Activated T-helper 1 cell treated with anti-CD3 and anti-CD28 coated beads, Interleukin-12 subunit alpha, Interleukin-12 subunit beta, Interleukin-2, Interleukin-4 antibody, amounts not matched to agents 30 ng/mL and 10 ng/mL and 1 ng/mL, durations not matched to agents 14 hours and 24 hours and 36 hours (primary cell): ENCODE measurements at regions of chr5 and their contacts with region 1.

Region 1: GRCh38 chr5:61331407-61332357 is at the start of gene ZSWIM6:
- DNase-seq: peak; percentile 96
- H3K4me3 Mint-ChIP-seq: peak within 1 kb of the TSS; percentile 96
- H3K27ac Mint-ChIP-seq: peak within 1 kb of the TSS; percentile 99
- H3K4me1 Mint-ChIP-seq: peaks cover 52% of the 10 kb centered on the region
- H3K27me3 Mint-ChIP-seq: peaks cover 45% of the 10 kb centered on the region
- total RNA-seq, gene ZSWIM6: 9.6 TPM in 2 replicates

Region 2: DNA sequence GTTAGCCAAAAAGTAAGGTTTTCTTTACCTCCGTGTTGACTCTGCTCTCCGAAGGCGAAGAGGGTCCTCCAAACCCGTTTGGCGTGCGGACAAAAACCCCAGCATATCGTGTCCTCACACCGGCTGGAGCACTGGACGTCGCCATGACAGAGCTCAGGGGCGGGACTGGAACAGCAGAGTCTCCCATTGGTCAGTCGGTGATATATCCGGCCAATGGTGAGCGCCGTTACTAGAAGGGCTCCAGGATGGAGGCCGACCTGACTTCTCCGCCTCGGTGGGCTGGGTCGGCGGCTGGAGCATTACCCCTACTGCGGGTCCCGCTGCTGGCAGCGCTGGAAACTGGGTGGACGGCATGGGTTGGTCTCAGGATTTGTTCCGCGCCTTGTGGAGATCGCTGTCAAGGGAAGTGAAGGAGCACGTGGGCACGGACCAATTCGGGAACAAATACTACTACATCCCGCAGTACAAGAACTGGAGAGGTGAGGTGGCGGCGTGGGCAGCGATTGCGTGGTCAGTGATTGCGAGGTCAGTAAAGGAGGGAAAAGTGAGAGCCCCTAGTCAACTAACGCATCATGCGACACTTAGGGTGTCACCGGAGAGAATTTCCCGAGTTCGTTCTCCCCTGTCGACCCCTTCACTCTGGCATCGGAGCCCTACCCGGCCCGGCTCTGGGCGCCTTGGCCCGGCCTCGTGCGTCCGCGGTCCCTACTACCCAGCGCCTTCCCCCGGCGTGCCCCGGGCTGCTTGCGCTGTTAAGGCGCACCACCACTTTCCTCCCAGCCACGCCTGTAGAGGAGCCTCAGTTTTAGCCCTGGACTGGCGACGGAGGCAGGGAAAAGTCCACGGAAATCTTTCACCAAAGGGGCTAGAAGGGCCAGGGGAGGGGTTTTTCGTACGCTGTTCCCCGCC is 386.5 kb before region 1 on chr5 and contains the starts of genes ERCC8 and NDUFAF2:
- intact Hi-C with region 1: loop called (anchors 1 kb)
- DNase-seq: peak; percentile 85
- H3K4me3 Mint-ChIP-seq: no peak within 1 kb of the TSS
- H3K27ac Mint-ChIP-seq: no peak within 1 kb of the TSS
- H3K4me1 Mint-ChIP-seq: peaks cover 22% of the 10 kb centered on the region
- H3K27me3 Mint-ChIP-seq: no peaks in the 10 kb centered on the region
- total RNA-seq, gene ERCC8: 9.8 and 10.7 TPM in 2 replicates
- total RNA-seq, gene NDUFAF2: 32.9 and 33.8 TPM in 2 replicates

Region 3: GRCh38 chr5:61162010-61162831 is 169.5 kb before region 1 on chr5 and contains the start of gene SMIM15:
- intact Hi-C with region 1: loop called (anchors 1 kb)
- DNase-seq: peak; percentile 81
- H3K4me3 Mint-ChIP-seq: peak within 1 kb of the TSS; percentile 95
- H3K27ac Mint-ChIP-seq: peak within 1 kb of the TSS; percentile 92
- H3K4me1 Mint-ChIP-seq: peaks cover 40% of the 10 kb centered on the region
- H3K27me3 Mint-ChIP-seq: no peaks in the 10 kb centered on the region
- total RNA-seq, gene SMIM15: 84.0 and 86.7 TPM in 2 replicates

Region 4: DNA sequence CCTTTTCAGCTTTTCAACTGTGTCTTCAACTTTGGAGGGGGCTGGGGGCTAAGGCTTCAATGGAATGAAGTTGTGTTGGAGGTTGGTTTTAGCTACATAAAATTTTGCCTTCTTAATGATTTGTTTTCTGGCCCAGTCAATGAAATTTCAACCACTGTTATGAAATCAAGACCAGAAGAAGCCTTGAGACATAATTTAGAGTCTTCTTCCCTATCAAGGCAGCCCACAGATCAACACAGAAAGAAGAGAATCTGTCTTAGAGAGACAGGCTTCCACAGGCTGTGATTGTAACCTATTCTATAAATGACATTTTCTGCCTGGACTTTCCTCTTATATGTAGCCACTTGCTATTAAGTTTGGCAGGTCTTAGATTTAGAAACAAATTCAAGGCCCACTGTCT is 46.2 kb before region 1 on chr5:
- intact Hi-C with region 1: loop called (anchors 2 kb)
- DNase-seq: no peak
- H3K4me3 Mint-ChIP-seq: no peak overlapping the region
- H3K27ac Mint-ChIP-seq: no peak overlapping the region
- H3K4me1 Mint-ChIP-seq: no peaks in the 10 kb centered on the region
- H3K27me3 Mint-ChIP-seq: no peaks in the 10 kb centered on the region

Region 5: DNA sequence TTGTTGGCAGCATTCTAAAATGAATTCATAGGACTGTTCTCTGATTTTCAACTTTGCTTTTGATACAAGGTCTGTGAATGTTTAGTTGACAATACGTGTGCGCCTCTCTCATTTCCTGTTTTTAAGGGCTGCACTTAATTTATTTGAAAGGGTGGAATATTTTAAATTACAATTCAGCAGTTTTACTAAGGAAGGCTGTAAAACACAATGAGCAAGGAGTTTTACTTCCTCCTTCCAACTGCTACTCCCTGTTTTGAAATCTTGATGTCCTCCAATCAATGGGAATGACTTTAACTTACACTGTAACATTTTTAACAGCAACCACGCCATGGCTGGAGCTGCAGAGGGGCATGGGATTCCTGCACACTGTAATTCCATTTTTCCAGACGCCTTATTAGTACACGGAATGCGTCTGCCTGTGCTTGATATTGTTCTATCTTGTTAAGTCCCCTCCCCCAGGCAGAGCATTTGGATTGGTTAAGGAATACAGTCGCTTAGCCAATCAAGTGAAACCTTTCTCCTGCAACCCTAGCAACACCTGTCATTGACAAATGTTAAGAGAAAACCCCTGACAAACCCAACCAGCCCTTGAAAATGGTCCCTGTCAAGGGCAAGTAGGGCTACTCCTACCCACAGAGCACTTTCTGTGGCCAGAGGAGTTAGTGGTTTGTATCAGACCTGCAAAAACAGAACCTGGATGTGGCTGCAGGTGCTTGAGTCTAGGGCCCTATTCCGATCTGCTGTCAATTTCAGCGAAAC is 12.1 kb before region 1 on chr5:
- intact Hi-C with region 1: no loop called
- DNase-seq: no peak
- H3K4me3 Mint-ChIP-seq: no peak overlapping the region
- H3K27ac Mint-ChIP-seq: no peak overlapping the region
- H3K4me1 Mint-ChIP-seq: peaks cover 13% of the 10 kb centered on the region
- H3K27me3 Mint-ChIP-seq: peaks cover 22% of the 10 kb centered on the region

Region 6: DNA sequence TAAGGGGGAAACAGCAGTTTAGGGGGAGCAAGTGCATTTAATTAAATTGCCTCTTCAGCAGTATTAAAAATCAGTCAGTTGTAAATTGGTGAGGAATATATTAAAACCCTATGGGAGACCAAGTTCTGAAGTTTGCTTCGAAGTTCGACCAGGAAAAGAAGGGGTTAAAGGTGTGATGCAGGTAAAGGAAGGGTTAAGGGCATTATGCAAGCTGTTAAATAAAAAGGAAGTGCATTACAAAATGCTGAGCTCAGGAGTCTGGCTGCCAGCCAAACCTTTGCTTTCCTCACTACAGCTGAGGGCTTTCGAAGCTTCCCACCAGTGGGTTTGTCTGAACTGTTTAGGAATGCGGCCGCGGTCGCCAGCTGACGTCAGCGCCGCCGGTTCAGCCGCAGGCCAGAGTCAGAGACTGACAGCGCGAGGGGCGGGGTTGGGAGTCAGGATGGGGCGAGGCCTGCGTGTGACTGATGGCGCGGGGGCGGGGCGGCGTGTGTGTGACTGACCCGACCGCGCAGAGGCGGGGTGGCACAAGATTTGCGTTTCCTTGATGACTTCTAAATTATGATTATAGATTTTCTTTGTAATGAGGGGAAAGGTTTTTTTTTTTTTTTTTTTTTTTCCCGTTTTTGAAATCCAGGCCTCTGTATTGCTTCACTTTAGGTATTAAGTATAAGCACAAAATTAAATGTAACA is 76.9 kb after region 1 on chr5:
- intact Hi-C with region 1: loop called (anchors 1 kb)
- DNase-seq: peak; percentile 90
- H3K4me3 Mint-ChIP-seq: peak overlapping the region; percentile 59
- H3K27ac Mint-ChIP-seq: peak overlapping the region; percentile 56
- H3K4me1 Mint-ChIP-seq: peaks cover 23% of the 10 kb centered on the region
- H3K27me3 Mint-ChIP-seq: peaks cover 7% of the 10 kb centered on the region

Region 7: DNA sequence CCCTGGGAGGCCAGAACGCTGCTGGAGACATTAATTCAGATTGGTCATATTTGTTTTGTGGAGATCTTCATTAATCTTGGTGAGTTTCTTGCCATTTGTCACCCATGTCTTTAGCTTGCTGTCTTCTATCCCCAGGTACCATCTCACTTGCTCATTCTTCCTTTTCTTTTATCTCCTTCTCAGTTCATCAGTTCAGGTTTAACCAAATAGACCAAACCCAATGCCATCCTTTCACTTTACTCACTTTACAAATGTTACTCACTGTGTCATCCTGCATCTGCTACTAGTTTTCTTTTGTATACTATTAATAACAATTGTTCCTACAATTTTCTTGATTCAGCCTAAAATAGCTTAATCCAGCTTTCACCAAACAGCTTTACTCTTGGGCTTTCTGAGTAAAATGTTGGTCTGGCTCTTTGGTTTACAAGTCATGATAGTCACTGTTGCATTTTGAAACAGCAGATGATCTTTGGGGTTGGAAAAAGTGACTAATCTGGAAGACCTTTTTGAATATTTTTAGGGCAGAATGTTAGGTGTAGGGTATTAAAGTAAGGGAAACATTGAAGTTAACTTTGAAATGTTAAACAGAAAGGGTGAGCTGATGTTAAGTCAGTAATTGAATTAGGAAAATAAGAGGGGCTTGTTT is 247.3 kb after region 1 on chr5:
- intact Hi-C with region 1: loop called (anchors 1 kb)
- DNase-seq: no peak
- H3K4me3 Mint-ChIP-seq: no peak overlapping the region
- H3K27ac Mint-ChIP-seq: no peak overlapping the region
- H3K4me1 Mint-ChIP-seq: no peaks in the 10 kb centered on the region
- H3K27me3 Mint-ChIP-seq: peaks cover 7% of the 10 kb centered on the region

Region 8: GRCh38 chr5:62305715-62306322 is 974.1 kb after region 1 on chr5 and contains the start of gene KIF2A:
- intact Hi-C with region 1: loop called (anchors 5 kb)
- DNase-seq: peak; percentile 95
- H3K4me3 Mint-ChIP-seq: peak within 1 kb of the TSS; percentile 99
- H3K27ac Mint-ChIP-seq: peak within 1 kb of the TSS; percentile 99
- H3K4me1 Mint-ChIP-seq: peaks cover 57% of the 10 kb centered on the region
- H3K27me3 Mint-ChIP-seq: no peaks in the 10 kb centered on the region
- total RNA-seq, gene KIF2A: 235 and 240 TPM in 2 replicates